ENCODE measurements at regions of chr15 and their contacts with region 1.

Region 1: GRCh38 chr15:67125589-67126502 is 60.4 kb downstream of the SMAD3 start:
- DNase-seq: peak; percentile 98
- H3K4me3 ChIP-seq: peak overlapping the region; percentile 54
- H3K27ac ChIP-seq: peak overlapping the region; percentile 98
- H3K27me3 ChIP-seq: no peaks in the 10 kb centered on the region
- CTCF ChIP-seq: no peak

Region 2: DNA sequence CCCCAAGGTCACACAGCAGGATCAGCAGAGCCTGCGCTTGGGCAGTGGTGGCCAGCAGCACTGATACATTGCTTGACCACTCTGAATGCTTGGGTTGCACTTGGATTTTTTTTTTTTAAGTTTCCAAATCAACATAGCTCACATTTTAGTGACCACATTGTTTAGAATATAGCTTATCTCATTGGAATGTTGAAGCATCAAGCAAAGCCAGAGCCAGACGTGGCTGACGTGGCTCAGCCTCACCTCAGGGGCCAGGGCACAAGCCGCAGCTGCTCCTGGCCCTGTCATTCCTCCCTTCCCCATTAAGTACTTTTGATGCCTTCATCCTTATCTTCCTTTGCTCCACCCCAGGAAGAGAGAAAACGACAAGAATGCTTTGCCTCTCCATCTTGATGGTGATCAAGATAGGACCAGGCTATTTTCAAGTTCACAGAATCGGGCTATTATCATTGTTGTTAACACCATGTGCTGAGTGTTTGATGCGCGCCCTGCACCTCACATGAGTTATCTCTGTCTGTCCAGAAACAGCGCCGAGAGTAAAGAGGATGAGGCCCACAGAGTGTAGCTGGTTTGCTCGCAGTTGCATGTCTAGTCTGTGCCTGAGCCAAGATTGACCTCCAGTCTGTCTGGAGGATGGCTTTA is 52.8 kb after region 1 on chr15:
- CTCF ChIA-PET with region 1: no interaction called
- POLR2A ChIA-PET with region 1: interaction called, 12 read pairs
- DNase-seq: peak; percentile 97
- H3K4me3 ChIP-seq: no peak overlapping the region
- H3K27ac ChIP-seq: peak overlapping the region; percentile 98
- H3K27me3 ChIP-seq: no peaks in the 10 kb centered on the region
- CTCF ChIP-seq: no peak

Region 3: GRCh38 chr15:67196222-67196621 is 70.4 kb after region 1 on chr15:
- CTCF ChIA-PET with region 1: no interaction called
- POLR2A ChIA-PET with region 1: interaction called, 11 read pairs
- DNase-seq: no peak
- H3K4me3 ChIP-seq: no peak overlapping the region
- H3K27ac ChIP-seq: peak overlapping the region; percentile 86
- H3K27me3 ChIP-seq: no peaks in the 10 kb centered on the region
- CTCF ChIP-seq: no peak